IMR-90 (cell line): ENCODE measurements at regions of chr22 and their contacts with region 1.

Region 1: DNA sequence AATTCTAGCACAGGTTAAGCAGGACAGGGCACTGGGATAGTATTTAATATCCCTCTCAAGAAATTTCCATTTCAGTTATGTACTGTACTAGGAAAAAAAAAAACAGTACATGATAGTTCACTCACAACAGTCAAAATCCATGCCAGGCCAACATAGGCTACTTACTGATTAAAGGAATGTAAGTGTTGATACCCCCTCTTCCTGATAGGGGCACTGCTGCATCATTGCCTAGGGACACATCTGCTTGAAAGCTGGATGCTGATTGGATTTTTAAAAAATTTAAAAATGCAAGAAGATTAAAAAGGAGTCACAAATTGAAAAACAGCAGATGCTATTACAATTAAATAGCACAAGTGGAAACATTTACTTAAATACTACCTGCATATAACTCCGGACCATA is 43.4 kb downstream of the APOL5 start:
- DNase-seq: peak; percentile 24
- ATAC-seq: peak; percentile 32; the same call in 1 of the 2 replicates
- H3K4me3 ChIP-seq: no peak overlapping the region
- H3K27ac ChIP-seq: no peak overlapping the region
- H3K4me1 ChIP-seq: no peaks in the 10 kb centered on the region
- H3K27me3 ChIP-seq: no peaks in the 10 kb centered on the region
- CTCF ChIP-seq: peak; percentile 30; the same call in 1 of the 2 replicates
- POLR2A ChIP-seq: no peak
- RAD21 ChIP-seq: peak; percentile 40

Region 2: DNA sequence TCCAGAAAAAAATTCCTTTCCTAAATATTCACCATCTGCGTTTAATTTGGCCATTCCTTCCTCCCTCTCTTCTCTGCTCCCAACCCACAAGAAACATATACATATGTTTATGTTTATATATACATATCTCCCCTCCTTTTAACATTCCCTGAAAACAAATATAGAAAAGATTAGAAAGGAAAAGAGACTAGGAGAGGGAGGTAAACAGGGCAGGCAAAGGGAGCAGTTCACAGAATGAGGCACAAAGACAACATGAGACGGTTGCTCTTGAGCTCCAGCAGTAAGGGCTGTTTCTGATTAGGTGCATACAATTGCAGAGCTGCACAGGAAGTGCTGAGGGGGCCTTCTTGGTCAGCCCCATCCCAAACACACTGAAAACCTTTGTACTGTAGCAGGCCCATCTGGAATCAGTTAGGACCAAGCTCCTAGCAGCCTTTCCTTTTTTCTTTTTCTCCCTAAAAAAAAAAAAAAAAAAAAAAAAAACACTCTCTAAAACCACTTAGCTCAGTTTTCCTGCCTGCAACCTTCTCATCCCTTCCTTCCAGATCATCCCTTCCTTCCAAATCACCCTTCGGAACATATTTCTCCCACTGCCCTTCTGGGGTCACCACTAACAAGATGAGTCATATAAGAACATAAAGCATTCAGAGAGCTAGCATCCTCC is 210.6 kb after region 1 on chr22:
- CTCF ChIA-PET with region 1: no interaction called
- POLR2A ChIA-PET with region 1: interaction called, 11 read pairs
- dilution Hi-C with region 1: no loop called
- in situ Hi-C with region 1: no loop called
- intact Hi-C with region 1: no loop called
- DNase-seq: peak; percentile 93
- ATAC-seq: peak; percentile 70
- H3K4me3 ChIP-seq: no peak overlapping the region
- H3K27ac ChIP-seq: peak overlapping the region; percentile 95
- H3K4me1 ChIP-seq: peaks cover 34% of the 10 kb centered on the region
- H3K27me3 ChIP-seq: no peaks in the 10 kb centered on the region
- CTCF ChIP-seq: no peak
- POLR2A ChIP-seq: no peak
- RAD21 ChIP-seq: no peak